Activated T-helper 2 cell treated with anti-CD3 and anti-CD28 coated beads, Interferon-gamma antibody, Interleukin-2, Interleukin-4, amounts not matched to agents 10 μg/mL and 5 μg/mL and 100 μg/mL, durations not matched to agents 14 hours and 24 hours and 36 hours (primary cell): ENCODE measurements at regions of chr17 and their contacts with region 1.

Region 1: DNA sequence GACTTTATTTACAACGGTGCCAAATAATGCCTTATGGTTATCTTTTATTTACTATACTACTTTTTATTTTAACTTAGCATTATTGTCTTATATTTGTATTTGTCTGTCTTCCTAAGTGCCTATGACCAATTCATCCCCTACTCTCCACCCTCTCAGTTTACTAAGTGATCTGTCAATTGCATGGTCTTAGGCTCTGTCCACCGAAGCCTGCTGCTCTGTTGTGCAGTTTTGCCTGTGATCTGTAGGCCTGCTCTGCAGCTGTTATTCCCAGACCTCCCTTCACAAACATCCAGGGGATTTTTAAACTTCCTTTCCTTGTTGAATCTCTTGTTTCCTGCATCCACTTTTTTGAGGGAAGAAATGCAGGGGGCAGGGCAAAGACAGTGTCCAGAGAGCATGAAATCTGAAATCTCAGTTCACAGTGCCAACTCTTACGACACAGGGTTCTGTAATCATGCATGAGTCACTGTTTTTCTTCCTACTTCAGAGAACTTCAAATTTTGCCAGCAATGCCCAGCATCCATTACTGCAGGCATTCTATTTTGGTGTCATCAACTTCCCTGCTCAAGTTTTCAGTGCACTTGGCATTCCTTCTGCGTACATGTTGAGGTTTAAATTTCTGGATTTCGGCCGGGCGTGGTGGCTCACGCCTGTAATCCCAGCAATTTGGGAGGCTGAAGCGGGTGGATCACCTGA is 11.4 kb downstream of the SLFN5 start:
- DNase-seq: no peak
- H3K4me3 Mint-ChIP-seq: no peak overlapping the region
- H3K27ac Mint-ChIP-seq: no peak overlapping the region
- H3K4me1 Mint-ChIP-seq: peaks cover 16% of the 10 kb centered on the region
- H3K27me3 Mint-ChIP-seq: no peaks in the 10 kb centered on the region

Region 2: GRCh38 chr17:35286120-35286781 is 32.0 kb after region 1 on chr17:
- intact Hi-C with region 1: loop called (anchors 2 kb)
- DNase-seq: peak; percentile 19
- H3K4me3 Mint-ChIP-seq: no peak overlapping the region
- H3K27ac Mint-ChIP-seq: peak overlapping the region; percentile 28
- H3K4me1 Mint-ChIP-seq: peaks cover 38% of the 10 kb centered on the region
- H3K27me3 Mint-ChIP-seq: peaks cover 12% of the 10 kb centered on the region

Region 3: DNA sequence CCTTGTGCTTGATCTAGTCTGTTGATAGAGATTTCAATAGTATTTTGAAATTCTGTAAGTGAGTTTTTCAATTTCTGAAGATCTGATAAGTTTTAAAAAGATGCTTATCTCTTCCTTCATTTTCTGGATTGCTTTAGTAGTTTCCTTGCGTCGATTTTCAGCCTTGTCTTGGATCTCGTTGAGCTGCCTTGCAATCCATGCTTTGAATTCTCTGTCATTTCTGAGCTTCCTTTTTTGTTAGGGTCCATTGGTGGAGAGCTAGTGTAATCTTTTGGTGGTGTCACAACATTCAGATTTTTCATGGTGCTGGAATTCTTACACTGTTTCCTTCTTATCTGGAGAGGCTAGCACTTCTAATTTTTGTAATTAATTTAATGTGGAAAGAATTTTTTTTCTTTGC is 58.1 kb after region 1 on chr17:
- intact Hi-C with region 1: no loop called
- DNase-seq: no peak
- H3K4me3 Mint-ChIP-seq: peak overlapping the region; percentile 52
- H3K27ac Mint-ChIP-seq: peak overlapping the region; percentile 80
- H3K4me1 Mint-ChIP-seq: peaks cover 39% of the 10 kb centered on the region
- H3K27me3 Mint-ChIP-seq: peaks cover 1% of the 10 kb centered on the region